AG04449 (cell line): ENCODE measurements at regions of chr16 and their contacts with region 1.

Region 1: GRCh38 chr16:84084570-84085270 is 32.0 kb downstream of the MBTPS1 start:
- DNase-seq: no peak
- H3K4me3 ChIP-seq: no peak overlapping the region
- CTCF ChIP-seq: peak; percentile 88

Region 2: GRCh38 chr16:83952940-83953795 is 131.6 kb before region 1 on chr16 and contains the start of gene OSGIN1:
- CTCF ChIA-PET with region 1: interaction called, 12 read pairs
- POLR2A ChIA-PET with region 1: no interaction called
- DNase-seq: peak; percentile 34
- H3K4me3 ChIP-seq: peak within 1 kb of the TSS; percentile 69
- CTCF ChIP-seq: no peak

Region 3: GRCh38 chr16:84072014-84072413 is 12.7 kb before region 1 on chr16:
- CTCF ChIA-PET with region 1: interaction called, 295 read pairs
- POLR2A ChIA-PET with region 1: no interaction called
- DNase-seq: no peak
- H3K4me3 ChIP-seq: no peak overlapping the region
- CTCF ChIP-seq: no peak

Region 4: GRCh38 chr16:84096115-84097012 is 11.6 kb after region 1 on chr16:
- CTCF ChIA-PET with region 1: interaction called, 52 read pairs
- POLR2A ChIA-PET with region 1: interaction called, 3 read pairs
- DNase-seq: no peak
- H3K4me3 ChIP-seq: no peak overlapping the region
- CTCF ChIP-seq: no peak

Region 5: DNA sequence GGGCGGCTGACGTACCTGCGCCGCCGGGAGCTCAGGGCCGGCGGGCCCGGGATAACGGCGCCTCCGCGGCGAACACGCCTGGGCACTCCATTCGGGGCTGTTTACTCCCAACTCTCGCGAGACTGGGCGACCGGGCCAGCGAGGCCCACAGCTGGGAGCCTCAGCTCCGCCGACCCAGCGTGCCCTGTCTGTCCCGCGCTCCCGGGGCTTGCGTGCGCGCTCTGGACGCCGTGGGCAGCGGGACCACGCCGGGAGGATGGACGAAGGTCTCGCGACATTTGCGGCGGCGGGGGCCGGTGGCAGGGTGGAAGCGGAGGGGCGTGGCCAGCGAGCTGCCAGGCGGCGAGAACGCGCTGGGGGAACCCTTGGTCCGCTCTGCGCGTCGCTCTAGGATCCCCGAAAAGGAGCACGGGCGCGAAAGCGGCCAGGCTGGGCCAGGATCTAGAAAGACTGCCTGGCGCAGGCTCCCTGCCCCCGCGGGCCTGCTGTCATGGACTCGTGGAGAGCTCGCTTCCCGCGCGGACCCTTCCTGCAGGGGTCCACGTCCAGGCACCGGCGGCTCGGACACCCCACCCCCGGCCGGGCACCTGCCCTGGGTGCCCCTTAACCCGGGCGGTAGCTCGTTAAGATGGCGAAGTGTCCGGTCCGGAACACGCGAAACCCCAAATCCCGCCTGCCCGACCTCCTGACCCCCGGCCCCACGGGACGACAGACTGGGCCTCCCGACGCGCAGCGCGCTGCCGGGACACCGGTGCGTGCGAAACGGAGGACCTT is 32.2 kb after region 1 on chr16 and contains the start of gene MBTPS1:
- CTCF ChIA-PET with region 1: interaction called, 16 read pairs
- POLR2A ChIA-PET with region 1: no interaction called
- DNase-seq: peak; percentile 73
- H3K4me3 ChIP-seq: peak within 1 kb of the TSS; percentile 98
- CTCF ChIP-seq: no peak

Region 6: DNA sequence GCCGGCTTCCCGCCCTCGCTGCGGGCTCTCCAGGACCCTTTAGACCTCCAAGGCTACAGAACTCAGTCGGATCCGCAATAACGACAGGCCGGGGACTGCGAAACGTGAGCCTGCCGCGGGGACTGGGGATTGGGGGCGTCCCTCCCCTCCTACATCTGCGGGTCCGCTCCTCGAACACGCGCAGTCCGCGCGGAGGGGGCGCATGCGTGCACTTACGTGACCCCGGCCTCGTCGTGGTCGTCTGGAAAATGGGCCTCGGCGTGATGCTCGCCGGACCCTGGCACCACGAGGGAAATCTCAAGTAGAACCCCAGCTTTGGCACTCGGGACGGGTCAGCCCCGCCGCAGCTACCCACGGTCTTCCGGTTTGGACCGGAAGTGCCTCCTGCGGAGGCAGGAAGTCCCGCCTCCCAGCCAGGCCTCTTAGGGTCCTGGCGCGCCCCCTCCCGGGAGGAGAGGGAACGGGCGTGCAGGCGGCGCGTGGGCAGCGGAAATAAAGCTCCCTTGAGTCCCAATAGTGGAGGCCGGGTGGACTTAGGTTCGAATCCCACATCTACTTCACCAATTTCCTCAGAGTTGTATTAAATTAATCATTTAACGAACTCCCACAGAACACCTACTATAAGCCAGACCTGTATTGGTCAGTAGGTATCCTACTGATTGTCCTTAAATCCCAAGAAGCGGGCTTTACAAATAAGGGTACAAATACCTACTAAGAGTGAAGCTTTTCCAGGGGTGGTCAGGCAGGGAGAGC is 102.1 kb after region 1 on chr16 and contains the start of gene TAF1C:
- CTCF ChIA-PET with region 1: interaction called, 14 read pairs
- POLR2A ChIA-PET with region 1: no interaction called
- DNase-seq: peak; percentile 68
- H3K4me3 ChIP-seq: peak within 1 kb of the TSS; percentile 89
- CTCF ChIP-seq: peak; percentile 99

Region 7: GRCh38 chr16:84308120-84308519 is 223.4 kb after region 1 on chr16:
- CTCF ChIA-PET with region 1: interaction called, 22 read pairs
- POLR2A ChIA-PET with region 1: no interaction called
- DNase-seq: no peak
- H3K4me3 ChIP-seq: no peak overlapping the region
- CTCF ChIP-seq: peak; percentile 74